GM10248 (cell line): ENCODE measurements at regions of chr3 and their contacts with region 1.

Region 1: DNA sequence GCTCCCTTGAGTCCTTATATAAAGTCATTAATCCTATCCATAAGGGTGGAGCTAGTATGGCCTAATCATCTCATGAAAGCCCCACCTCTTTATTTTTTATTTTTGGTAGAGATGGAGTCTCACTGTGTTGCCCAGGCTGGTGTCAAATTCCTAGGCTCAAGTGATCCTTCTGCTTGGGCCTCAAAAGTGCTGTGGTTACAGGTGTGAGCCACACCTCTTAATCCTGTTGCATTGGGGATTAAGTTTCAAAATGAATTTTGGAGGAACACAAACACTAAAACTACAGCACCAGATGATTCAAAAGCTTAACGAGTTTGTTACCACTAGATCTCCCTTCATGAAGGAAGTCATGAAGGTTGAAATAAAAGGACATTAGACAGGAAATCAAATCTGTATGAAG is 27.7 kb downstream of the RAB7A start:
- DNase-seq: no peak
- CTCF ChIP-seq: no peak

Region 2: DNA sequence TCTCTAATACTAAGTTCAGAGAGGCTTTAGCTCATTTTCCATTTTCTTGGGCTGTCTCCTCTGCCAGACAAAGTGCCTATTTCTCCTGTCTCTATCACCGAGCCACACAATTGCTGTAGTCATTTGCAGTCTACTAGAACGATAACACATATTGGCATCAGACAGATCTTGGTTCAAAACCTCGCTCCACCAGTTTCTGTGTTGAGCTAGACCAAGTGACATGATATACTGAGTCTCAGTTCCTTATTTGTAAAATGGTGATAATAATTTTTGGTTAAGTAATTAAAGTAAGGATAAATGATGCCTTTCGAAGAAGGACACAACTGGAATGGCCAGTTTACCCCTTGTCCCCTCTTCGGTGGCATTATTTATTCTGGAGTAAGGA is 28.2 kb before region 1 on chr3:
- CTCF ChIA-PET with region 1: no interaction called
- POLR2A ChIA-PET with region 1: no interaction called
- DNase-seq: no peak
- CTCF ChIP-seq: no peak

Region 3: GRCh38 chr3:128804017-128804810 is 50.5 kb after region 1 on chr3:
- CTCF ChIA-PET with region 1: interaction called, 3 read pairs
- POLR2A ChIA-PET with region 1: interaction called, 13 read pairs
- DNase-seq: peak; percentile 86
- CTCF ChIP-seq: no peak